ENCODE measurements at regions of chr16 and their contacts with region 1.

Region 1: GRCh38 chr16:11255737-11256660 is at the start of gene SOCS1:
- DNase-seq: no peak
- H3K4me3 ChIP-seq: peak within 1 kb of the TSS; percentile 74
- CTCF ChIP-seq: peak; percentile 74

Region 2: GRCh38 chr16:10964039-10964890 is 291.7 kb before region 1 on chr16:
- CTCF ChIA-PET with region 1: interaction called, 492 read pairs
- POLR2A ChIA-PET with region 1: interaction called, 42 read pairs
- DNase-seq: no peak
- H3K4me3 ChIP-seq: no peak overlapping the region
- CTCF ChIP-seq: peak; percentile 95

Region 3: DNA sequence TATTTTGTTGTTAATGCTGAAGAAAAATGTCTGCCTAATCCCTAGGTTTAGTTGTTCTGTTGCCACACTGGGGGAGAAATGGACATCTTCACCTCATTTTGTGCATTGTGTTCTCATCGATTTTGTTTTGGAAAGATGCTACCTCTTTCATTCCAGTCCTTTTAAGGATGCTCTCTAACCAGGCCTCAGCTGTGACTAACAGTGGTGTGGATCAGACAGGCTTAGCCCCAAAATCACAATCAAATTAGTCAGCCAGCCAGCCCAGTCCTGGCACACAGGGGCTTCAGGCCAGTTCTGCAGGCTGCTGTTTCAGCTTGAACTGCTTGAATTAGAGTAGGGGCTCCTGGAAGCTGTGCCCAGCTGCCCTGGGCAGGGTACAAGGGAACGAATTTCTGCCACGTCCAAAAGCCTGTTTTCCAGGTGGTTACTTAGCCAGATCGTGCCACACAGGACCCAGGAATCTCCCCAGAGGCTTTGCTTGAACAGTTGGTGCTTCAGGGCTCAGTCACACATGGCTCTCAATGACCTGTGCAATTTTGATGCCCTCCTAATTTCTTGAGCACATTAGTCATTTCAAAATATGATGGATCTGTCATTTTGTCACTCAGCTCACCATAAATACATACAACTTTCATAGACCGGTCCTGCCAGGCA is 250.9 kb before region 1 on chr16:
- CTCF ChIA-PET with region 1: interaction called, 9 read pairs
- POLR2A ChIA-PET with region 1: interaction called, 12 read pairs
- DNase-seq: peak; percentile 50
- H3K4me3 ChIP-seq: no peak overlapping the region
- CTCF ChIP-seq: no peak

Region 4: GRCh38 chr16:11105038-11105903 is 150.7 kb before region 1 on chr16:
- CTCF ChIA-PET with region 1: interaction called, 6 read pairs
- POLR2A ChIA-PET with region 1: interaction called, 10 read pairs
- DNase-seq: peak; percentile 79
- H3K4me3 ChIP-seq: no peak overlapping the region
- CTCF ChIP-seq: no peak

Region 5: DNA sequence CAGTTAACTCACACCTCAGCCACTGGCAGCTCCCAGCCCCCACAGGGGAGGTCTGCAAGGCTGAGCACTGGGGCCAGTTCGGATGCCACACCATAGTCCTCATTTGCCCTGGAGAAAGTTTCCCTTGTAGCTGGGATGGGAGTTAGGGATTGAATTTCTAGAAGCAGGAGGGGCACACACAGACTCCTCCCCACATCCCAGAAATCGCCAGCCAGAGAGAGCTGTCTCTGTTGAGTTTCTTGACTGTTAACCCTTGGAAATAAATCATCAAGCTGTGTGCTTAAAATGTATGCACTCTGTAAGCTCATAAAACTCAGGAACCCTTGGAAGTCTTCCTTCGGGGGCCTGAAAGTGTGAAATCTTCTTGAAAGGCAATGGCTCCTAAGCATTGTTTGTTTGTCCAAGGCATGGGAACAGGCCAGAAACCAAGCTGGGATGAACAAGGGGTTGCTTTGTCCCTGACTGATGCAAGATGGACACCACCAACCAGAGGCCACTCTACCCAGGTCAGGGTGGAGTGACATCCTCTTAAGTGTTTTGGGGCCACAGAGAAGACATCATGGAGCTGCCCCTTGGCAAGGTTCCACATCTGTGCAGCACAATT is 17.8 kb after region 1 on chr16:
- CTCF ChIA-PET with region 1: interaction called, 24 read pairs
- POLR2A ChIA-PET with region 1: interaction called, 5 read pairs
- DNase-seq: no peak
- H3K4me3 ChIP-seq: no peak overlapping the region
- CTCF ChIP-seq: no peak

Region 6: DNA sequence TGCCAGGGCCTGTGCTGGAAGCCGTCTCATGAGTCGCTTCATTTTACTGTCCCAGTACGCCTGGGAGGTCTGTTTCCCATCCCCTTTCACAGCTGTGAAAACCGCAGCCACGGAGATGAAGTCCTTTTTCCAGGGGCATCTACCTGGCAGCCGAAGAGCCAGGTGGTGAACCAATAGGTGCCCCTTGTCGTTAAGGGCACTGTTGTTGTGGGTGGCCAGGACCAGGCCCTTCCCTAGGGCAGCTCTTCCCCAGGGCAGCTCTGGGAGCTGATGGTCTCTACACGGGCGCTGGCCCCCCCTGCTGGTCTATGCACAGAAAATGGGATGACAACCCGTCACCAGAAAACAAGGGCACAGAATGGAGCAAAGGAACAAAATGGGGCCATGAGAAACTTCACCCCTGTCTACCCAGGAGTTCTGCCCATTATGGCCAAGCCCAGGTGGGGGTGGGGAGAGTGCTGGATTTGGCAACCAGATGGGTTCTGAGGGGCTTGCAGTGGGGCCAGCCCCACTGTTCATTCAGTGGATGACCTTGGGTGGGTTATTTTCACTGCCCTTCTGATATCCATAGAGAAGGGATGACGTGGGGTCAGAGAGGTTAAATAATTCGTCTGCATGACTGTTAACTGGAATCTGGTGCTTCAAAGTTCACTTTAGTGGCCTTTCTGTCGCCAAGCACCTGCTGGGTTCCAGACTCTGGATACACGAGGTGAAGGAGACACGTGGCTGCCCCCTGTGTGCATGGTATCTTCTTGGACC is 100.8 kb after region 1 on chr16:
- CTCF ChIA-PET with region 1: interaction called, 155 read pairs
- POLR2A ChIA-PET with region 1: interaction called, 33 read pairs
- DNase-seq: no peak
- H3K4me3 ChIP-seq: no peak overlapping the region
- CTCF ChIP-seq: peak; percentile 81